Breast epithelium (tissue), 4 donors: ENCODE measurements at regions of chr12 and their contacts with region 1.

Region 1: DNA sequence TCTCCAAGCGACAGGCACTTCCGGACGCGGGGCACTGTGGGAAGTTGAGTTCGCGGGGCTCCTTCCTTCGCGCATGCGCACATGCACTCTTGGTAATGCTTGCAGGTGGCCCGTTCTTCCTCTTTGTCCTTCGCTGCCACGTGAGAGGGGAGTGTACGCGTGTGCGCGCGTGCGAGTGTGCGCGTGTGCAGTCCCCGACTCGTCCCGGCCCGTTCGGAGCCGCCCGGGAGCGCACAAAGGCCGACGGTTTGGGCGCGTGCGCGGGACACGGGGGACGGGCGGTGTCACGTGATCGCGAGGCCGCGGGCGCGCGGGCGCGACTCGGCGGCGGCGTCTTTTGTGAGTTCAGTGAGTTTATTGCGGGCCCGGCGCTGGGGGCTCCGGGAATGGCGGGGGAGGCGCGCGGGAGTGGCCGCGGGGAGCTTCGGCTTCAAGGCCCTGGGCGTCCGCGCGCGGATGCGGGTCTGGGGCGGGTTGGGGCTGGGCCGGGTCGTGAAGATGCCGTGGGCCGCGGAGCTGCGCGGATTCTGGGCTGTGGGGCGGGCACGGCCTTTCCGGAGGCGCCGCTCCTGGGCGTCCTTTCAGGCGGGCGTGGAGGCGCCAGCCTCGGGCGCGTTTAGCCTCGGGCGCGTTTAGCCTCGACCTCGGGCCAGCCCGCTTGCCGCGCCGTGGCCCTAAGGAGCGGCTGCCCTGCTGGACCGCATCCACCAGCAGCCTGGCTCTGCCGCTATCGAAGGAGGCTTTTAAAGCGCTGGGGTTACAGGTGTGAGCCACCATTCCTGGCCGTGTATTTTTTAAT is at the start of gene ZNF84:
- DNase-seq: peak; percentile 94 to 97
- H3K4me3 ChIP-seq: peak within 1 kb of the TSS; percentile 72 to 86 (median 74)
- H3K27ac ChIP-seq: peak within 1 kb of the TSS; percentile 93 to 96
- H3K4me1 ChIP-seq: no peaks in the 10 kb centered on the region
- H3K27me3 ChIP-seq: no peaks in the 10 kb centered on the region
- CTCF ChIP-seq: no peak
- POLR2A ChIP-seq: peak; percentile 12
- total RNA-seq, gene ZNF84: 25.0 to 61.0 (median 29.2) TPM

Region 2: DNA sequence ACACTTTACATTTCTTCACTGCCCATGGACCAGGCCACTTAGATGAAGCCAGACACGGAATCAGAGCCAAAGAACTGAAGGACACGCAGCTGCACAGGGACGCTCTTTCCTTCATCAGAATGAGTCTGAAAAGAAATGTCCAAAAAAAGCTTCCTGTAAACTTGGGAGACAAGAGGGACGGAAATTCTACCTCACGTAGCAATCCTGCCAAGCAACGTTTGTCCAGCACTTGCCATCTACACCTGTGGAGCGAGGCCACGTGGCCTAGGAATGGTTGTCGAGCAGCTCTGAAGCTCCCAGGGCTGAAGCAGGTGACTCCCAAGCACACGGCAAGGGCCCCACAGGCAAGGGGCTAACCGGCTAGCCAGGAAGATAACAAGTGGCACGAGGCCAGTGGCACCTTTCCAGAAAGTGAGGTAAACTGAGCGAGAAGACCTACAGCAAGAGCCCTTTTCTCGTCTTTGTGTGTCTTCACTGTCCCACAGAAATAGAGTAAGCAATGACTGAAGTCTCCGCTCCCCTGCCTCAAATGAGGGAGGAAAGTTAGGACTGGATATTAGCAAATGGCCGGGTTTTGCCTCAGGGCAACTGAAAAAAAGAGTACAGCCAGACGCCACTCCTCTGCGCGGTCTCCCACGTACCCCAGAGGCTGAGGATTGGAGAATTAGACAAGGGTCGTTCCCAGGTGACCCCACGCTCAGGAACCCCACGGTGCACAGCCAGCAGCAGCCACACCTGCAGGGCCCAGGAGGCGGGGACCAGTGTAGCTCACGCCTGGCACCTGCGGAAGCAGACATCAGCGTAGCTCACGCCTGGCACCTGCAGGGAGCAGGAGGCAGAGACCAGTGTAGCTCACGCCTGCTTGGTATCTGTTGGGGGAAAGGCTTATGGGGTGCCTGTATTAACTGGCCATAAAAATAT is 89.0 kb before region 1 on chr12:
- intact Hi-C with region 1: no loop called
- DNase-seq: no peak
- H3K4me3 ChIP-seq: no peak overlapping the region
- H3K27ac ChIP-seq: no peak overlapping the region
- H3K4me1 ChIP-seq: no peaks in the 10 kb centered on the region
- H3K27me3 ChIP-seq: no peaks in the 10 kb centered on the region
- CTCF ChIP-seq: no peak
- POLR2A ChIP-seq: no peak

Region 3: GRCh38 chr12:133120385-133121191 is 83.2 kb after region 1 on chr12:
- intact Hi-C with region 1: loop called (anchors 2 kb)
- DNase-seq: no peak
- H3K4me3 ChIP-seq: no peak overlapping the region
- H3K27ac ChIP-seq: no peak overlapping the region
- H3K4me1 ChIP-seq: no peaks in the 10 kb centered on the region
- H3K27me3 ChIP-seq: no peaks in the 10 kb centered on the region
- CTCF ChIP-seq: no peak
- POLR2A ChIP-seq: no peak